Mammary epithelial cell (primary cell): ENCODE measurements at regions of chr11 and their contacts with region 1.

Region 1: GRCh38 chr11:62787005-62787759 is at the start of gene TMEM179B:
- DNase-seq: peak; percentile 98
- H3K4me3 ChIP-seq: peak within 1 kb of the TSS; percentile 43 to 95 (median 67)
- H3K27ac ChIP-seq: peak within 1 kb of the TSS; percentile 70
- H3K4me1 ChIP-seq: peaks cover 21% of the 10 kb centered on the region
- H3K27me3 ChIP-seq: no peaks in the 10 kb centered on the region
- CTCF ChIP-seq: peak; percentile 52 to 71
- total RNA-seq, gene TMEM179B: 20.5 to 26.9 TPM

Region 2: GRCh38 chr11:62678770-62679696 is 108.1 kb before region 1 on chr11 and contains the start of gene UBXN1:
- CTCF ChIA-PET with region 1: no interaction called
- dilution Hi-C with region 1: no loop called
- in situ Hi-C with region 1: no loop called
- intact Hi-C with region 1: loop called (anchors 5 kb)
- DNase-seq: peak; percentile 83
- H3K4me3 ChIP-seq: peak within 1 kb of the TSS; percentile 85 to 96 (median 86)
- H3K27ac ChIP-seq: peak within 1 kb of the TSS; percentile 77
- H3K4me1 ChIP-seq: peaks cover 15% of the 10 kb centered on the region
- H3K27me3 ChIP-seq: no peaks in the 10 kb centered on the region
- CTCF ChIP-seq: no peak
- total RNA-seq, gene UBXN1: 63.7 to 93.1 TPM

Region 3: GRCh38 chr11:62732801-62733200 is 54.4 kb before region 1 on chr11:
- CTCF ChIA-PET with region 1: interaction called, 9 read pairs
- dilution Hi-C with region 1: no loop called
- in situ Hi-C with region 1: no loop called
- intact Hi-C with region 1: loop called (anchors 1 kb)
- DNase-seq: peak; percentile 41
- H3K4me3 ChIP-seq: no peak overlapping the region
- H3K27ac ChIP-seq: no peak overlapping the region
- H3K4me1 ChIP-seq: no peaks in the 10 kb centered on the region
- H3K27me3 ChIP-seq: no peaks in the 10 kb centered on the region
- CTCF ChIP-seq: no peak

Region 4: GRCh38 chr11:62816557-62816956 is 29.4 kb after region 1 on chr11:
- CTCF ChIA-PET with region 1: no interaction called
- dilution Hi-C with region 1: no loop called
- in situ Hi-C with region 1: no loop called
- intact Hi-C with region 1: no loop called
- DNase-seq: no peak
- H3K4me3 ChIP-seq: no peak overlapping the region
- H3K27ac ChIP-seq: no peak overlapping the region
- H3K4me1 ChIP-seq: no peaks in the 10 kb centered on the region
- H3K27me3 ChIP-seq: no peaks in the 10 kb centered on the region
- CTCF ChIP-seq: no peak

Region 5: GRCh38 chr11:62831520-62832335 is 44.5 kb after region 1 on chr11 and contains the start of gene STX5:
- CTCF ChIA-PET with region 1: interaction called, 3 read pairs
- dilution Hi-C with region 1: loop called (anchors 5 kb)
- in situ Hi-C with region 1: no loop called
- intact Hi-C with region 1: loop called (anchors 1 kb)
- DNase-seq: peak; percentile 97
- H3K4me3 ChIP-seq: peak within 1 kb of the TSS; percentile 59 to 84 (median 75)
- H3K27ac ChIP-seq: peak within 1 kb of the TSS; percentile 87
- H3K4me1 ChIP-seq: peaks cover 19% of the 10 kb centered on the region
- H3K27me3 ChIP-seq: no peaks in the 10 kb centered on the region
- CTCF ChIP-seq: no peak
- total RNA-seq, gene STX5: 26.7 to 44.1 TPM

Region 6: DNA sequence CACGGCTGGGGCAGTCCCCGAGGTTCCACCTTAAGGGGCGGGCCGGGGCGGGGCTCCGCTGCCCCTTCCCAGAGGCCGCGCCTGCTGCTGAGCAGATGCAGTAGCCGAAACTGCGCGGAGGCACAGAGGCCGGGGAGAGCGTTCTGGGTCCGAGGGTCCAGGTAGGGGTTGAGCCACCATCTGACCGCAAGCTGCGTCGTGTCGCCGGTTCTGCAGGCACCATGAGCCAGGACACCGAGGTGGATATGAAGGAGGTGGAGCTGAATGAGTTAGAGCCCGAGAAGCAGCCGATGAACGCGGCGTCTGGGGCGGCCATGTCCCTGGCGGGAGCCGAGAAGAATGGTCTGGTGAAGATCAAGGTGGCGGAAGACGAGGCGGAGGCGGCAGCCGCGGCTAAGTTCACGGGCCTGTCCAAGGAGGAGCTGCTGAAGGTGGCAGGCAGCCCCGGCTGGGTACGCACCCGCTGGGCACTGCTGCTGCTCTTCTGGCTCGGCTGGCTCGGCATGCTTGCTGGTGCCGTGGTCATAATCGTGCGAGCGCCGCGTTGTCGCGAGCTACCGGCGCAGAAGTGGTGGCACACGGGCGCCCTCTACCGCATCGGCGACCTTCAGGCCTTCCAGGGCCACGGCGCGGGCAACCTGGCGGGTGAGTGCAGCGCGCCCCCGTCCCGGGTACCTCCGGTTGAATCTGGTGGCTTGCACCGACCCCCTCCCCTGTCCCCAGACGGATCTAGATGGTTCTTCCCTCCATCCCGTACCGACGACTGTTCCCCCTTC is 93.8 kb after region 1 on chr11 and contains the start of gene SLC3A2:
- CTCF ChIA-PET with region 1: no interaction called
- dilution Hi-C with region 1: no loop called
- in situ Hi-C with region 1: no loop called
- intact Hi-C with region 1: loop called (anchors 2 kb)
- DNase-seq: peak; percentile 88
- H3K4me3 ChIP-seq: peak within 1 kb of the TSS; percentile 90 to 96 (median 91)
- H3K27ac ChIP-seq: peak within 1 kb of the TSS; percentile 99
- H3K4me1 ChIP-seq: peaks cover 41% of the 10 kb centered on the region
- H3K27me3 ChIP-seq: no peaks in the 10 kb centered on the region
- CTCF ChIP-seq: peak; percentile 32 to 72
- total RNA-seq, gene SLC3A2: 1,418 to 1,465 TPM